ENCODE measurements at regions of chr6 and their contacts with region 1.

Region 1: DNA sequence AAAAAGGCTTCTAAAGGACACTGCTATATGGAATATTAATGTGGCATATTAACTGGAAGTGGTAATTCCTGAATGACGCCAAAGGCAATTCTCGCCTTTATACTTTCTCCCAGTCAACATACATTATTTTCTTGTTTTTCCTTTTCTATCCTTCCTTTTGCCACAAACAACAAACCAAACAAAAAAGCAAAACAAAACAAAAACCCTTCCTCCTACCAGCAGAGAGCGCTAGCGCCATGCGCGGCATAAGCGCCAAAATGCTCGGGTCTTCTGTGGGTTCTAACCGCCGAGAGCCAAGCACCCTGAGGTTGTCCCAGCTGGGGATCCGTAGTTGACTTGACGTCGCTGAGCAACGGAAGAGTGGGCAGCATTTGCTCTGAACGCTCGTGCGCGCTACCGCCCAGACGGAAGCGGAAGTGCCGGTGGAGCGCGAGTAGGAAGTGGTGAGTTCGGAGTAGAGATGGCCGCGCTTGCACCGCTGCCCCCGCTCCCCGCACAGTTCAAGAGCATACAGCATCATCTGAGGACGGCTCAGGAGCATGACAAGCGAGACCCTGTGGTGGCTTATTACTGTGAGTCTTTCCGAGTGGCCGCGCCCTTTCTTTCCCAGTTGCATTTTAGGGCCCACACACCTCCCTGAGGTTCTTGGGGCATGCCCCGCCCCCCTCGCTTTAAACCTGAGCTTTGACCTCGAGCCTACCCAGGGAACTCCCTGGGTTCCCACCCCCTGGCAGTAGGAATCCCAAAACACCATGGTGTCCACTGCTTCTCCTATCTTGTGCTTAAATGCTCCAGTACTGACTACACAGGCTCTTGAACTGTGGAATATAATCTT is at the starts of genes NMBR and VTA1:
- DNase-seq: peak; percentile 81 to 98 (median 97)
- ATAC-seq: peak; percentile 99
- H3K4me3 ChIP-seq: peak within 1 kb of the TSS; percentile 95
- H3K4me3 Mint-ChIP-seq: peak within 1 kb of the TSS; percentile 88 to 98 (median 95)
- H3K27ac ChIP-seq: peak within 1 kb of the TSS; percentile 75
- H3K27ac Mint-ChIP-seq: peak within 1 kb of the TSS; percentile 80 to 98 (median 94)
- H3K4me1 ChIP-seq: peaks cover 22 to 25% of the 10 kb centered on the region in 2 donors
- H3K4me1 Mint-ChIP-seq: peaks cover 36 to 73% (median 65%) of the 10 kb centered on the region in 7 donors
- H3K27me3 ChIP-seq: no peaks in the 10 kb centered on the region
- H3K27me3 Mint-ChIP-seq: peaks cover 0 to 2% (median 0%) of the 10 kb centered on the region in 5 donors
- total RNA-seq, gene NMBR: not detected
- total RNA-seq, gene VTA1: 13.6 to 41.3 (median 32.6) TPM

Region 2: DNA sequence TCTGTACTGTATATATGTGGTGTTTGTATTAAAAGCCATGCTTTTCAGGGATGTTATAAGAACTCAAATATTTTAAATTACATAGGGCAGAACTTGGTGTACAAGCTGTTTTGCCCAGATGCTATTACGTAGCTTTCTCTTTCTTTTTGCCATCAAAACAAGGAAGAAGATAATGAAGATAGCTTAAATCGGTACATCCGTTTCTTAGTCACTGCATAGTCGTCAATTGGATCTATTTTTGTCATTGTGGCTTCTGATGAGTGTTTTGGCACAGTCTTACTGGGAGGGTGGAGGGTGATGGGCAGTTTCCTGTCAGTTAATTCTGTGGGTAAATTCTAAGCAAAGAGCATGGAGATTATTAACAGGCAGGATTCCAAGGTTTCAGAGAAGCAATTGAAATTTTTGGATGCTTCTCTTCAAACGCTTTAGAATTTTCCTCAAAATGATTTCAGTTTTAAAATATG is 663.4 kb before region 1 on chr6:
- CTCF ChIA-PET with region 1: no interaction called
- POLR2A ChIA-PET with region 1: no interaction called
- intact Hi-C with region 1: loop called (anchors 1 to 10 kb)
- DNase-seq: peak in 8 of 9 donors; percentile 32 to 85 (median 82)
- ATAC-seq: peak; percentile 98
- H3K4me3 ChIP-seq: peak overlapping the region; percentile 47
- H3K4me3 Mint-ChIP-seq: peak overlapping the region; percentile 74 to 93 (median 84)
- H3K27ac ChIP-seq: peak overlapping the region; percentile 68
- H3K27ac Mint-ChIP-seq: peak overlapping the region; percentile 81 to 97 (median 92)
- H3K4me1 ChIP-seq: peaks cover 11 to 24% of the 10 kb centered on the region in 2 donors
- H3K4me1 Mint-ChIP-seq: peaks cover 11 to 57% (median 41%) of the 10 kb centered on the region in 7 donors
- H3K27me3 ChIP-seq: no peaks in the 10 kb centered on the region
- H3K27me3 Mint-ChIP-seq: no peaks in the 10 kb centered on the region

Region 3: DNA sequence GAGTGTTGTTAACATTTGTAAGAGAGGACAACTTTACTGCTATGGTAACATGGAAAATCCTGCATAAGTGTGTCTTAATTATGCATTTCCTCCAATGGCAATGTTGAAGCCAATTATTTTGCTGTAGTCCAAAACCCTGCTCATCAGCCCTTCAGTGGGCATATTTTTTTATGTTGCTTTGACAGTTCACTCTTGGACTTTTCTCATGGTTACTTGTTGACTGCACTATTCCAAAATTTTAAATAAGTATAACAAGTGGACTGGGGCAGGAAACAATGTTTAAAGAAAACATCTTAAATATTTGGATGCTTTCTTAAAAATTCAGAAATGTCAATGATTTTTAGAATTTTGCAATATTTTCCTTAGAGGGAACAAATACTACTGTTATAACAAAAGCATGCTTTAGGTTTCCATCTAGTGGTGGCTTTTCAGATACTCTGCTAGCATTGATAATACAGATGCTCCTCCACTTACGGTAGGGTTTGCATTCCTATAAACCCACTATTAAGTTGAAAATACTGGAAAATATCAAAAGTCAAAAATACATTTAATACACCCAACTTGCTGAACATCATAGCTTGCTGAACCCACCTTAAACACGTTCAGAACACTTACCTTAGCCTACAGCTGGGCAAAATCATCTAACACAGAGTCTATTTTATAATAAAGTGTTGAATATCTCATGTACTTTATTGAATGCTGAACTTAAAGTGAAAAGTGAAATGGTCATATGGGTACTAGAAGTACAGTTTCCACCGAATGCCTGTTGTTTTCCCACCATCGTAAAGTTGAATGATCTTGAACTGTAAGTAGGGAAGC is 241.2 kb after region 1 on chr6:
- CTCF ChIA-PET with region 1: interaction called, 4 read pairs
- POLR2A ChIA-PET with region 1: interaction called, 5 read pairs
- intact Hi-C with region 1: loop called (anchors 1 kb)
- DNase-seq: peak in 7 of 9 donors; percentile 22 to 50 (median 26)
- ATAC-seq: peak; percentile 67
- H3K4me3 ChIP-seq: no peak overlapping the region
- H3K4me3 Mint-ChIP-seq: no peak overlapping the region
- H3K27ac ChIP-seq: no peak overlapping the region
- H3K27ac Mint-ChIP-seq: no peak overlapping the region
- H3K4me1 ChIP-seq: peaks cover 0 to 9% of the 10 kb centered on the region in 2 donors
- H3K4me1 Mint-ChIP-seq: peaks cover 0 to 28% (median 9%) of the 10 kb centered on the region in 7 donors
- H3K27me3 ChIP-seq: no peaks in the 10 kb centered on the region
- H3K27me3 Mint-ChIP-seq: peaks cover 0 to 49% (median 0%) of the 10 kb centered on the region in 5 donors

Region 4: GRCh38 chr6:143060354-143060805 is 913.3 kb after region 1 on chr6:
- CTCF ChIA-PET with region 1: no interaction called
- POLR2A ChIA-PET with region 1: no interaction called
- intact Hi-C with region 1: loop called in 1 of 2 experiments (anchors 2 kb)
- DNase-seq: peak; percentile 63 to 82 (median 72)
- ATAC-seq: peak; percentile 85
- H3K4me3 ChIP-seq: peak overlapping the region; percentile 73
- H3K4me3 Mint-ChIP-seq: peak overlapping the region; percentile 88 to 98 (median 94)
- H3K27ac ChIP-seq: peak overlapping the region; percentile 79
- H3K27ac Mint-ChIP-seq: peak overlapping the region; percentile 92 to 98 (median 96)
- H3K4me1 ChIP-seq: peaks cover 8% of the 10 kb centered on the region in 2 donors
- H3K4me1 Mint-ChIP-seq: peaks cover 16 to 34% (median 28%) of the 10 kb centered on the region in 7 donors
- H3K27me3 ChIP-seq: no peaks in the 10 kb centered on the region
- H3K27me3 Mint-ChIP-seq: no peaks in the 10 kb centered on the region

Region 5: DNA sequence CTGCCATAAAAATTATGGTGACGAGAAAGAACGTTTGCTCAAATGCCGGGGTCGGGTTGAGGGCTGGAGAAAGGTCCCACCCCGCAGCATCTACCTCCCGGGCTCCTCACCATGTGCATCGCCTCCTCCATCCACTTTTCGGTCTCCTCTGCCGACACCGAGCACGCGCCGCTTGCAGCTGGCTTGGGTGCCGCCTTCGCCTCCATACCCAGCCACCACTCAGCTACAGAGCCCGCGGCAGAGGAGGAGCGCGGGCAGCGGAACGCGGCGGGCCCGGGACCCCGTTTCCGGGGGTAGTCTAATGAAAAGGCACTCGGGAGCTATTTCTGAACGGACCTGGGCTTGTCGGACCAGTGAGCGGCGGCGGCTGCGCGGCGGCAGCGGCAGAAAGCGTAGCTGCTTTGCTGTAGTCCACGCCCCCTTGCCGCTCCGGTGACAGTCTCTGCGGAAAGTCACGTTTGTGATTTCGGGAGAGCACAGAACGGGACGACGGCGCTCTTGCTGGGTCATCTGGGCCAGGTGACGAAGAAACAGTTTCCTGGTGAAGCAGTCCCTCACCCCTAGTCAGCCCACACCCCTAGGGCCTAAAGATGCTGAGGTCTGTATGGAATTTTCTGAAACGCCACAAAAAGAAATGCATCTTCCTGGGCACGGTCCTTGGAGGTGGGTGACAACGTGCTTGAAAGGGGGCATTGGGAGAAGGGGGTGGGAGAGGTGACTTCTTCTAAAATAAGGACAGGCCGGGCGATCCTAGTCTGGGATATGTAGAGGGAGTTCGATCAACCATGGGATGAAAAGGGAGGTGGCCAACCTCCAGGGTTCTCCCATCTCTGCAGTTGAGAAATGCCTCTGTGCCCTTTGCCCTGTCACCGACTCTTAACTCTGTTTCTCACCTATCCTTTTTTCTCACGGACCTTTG is 1303.7 kb after region 1 on chr6 and contains the starts of genes ADAT2 and PEX3:
- CTCF ChIA-PET with region 1: no interaction called
- POLR2A ChIA-PET with region 1: no interaction called
- intact Hi-C with region 1: loop called (anchors 1 kb)
- DNase-seq: peak; percentile 87 to 95 (median 94)
- ATAC-seq: peak; percentile 98
- H3K4me3 ChIP-seq: peak within 1 kb of the TSS; percentile 89
- H3K4me3 Mint-ChIP-seq: peak within 1 kb of the TSS; percentile 84 to 100 (median 99)
- H3K27ac ChIP-seq: peak within 1 kb of the TSS; percentile 80
- H3K27ac Mint-ChIP-seq: peak within 1 kb of the TSS; percentile 93 to 99 (median 96)
- H3K4me1 ChIP-seq: peaks cover 14 to 18% of the 10 kb centered on the region in 2 donors
- H3K4me1 Mint-ChIP-seq: peaks cover 20 to 61% (median 49%) of the 10 kb centered on the region in 7 donors
- H3K27me3 ChIP-seq: no peaks in the 10 kb centered on the region
- H3K27me3 Mint-ChIP-seq: no peaks in the 10 kb centered on the region
- total RNA-seq, gene ADAT2: 18.4 to 25.8 (median 20.8) TPM
- total RNA-seq, gene PEX3: 10.9 to 28.8 (median 19.1) TPM

Region 6: DNA sequence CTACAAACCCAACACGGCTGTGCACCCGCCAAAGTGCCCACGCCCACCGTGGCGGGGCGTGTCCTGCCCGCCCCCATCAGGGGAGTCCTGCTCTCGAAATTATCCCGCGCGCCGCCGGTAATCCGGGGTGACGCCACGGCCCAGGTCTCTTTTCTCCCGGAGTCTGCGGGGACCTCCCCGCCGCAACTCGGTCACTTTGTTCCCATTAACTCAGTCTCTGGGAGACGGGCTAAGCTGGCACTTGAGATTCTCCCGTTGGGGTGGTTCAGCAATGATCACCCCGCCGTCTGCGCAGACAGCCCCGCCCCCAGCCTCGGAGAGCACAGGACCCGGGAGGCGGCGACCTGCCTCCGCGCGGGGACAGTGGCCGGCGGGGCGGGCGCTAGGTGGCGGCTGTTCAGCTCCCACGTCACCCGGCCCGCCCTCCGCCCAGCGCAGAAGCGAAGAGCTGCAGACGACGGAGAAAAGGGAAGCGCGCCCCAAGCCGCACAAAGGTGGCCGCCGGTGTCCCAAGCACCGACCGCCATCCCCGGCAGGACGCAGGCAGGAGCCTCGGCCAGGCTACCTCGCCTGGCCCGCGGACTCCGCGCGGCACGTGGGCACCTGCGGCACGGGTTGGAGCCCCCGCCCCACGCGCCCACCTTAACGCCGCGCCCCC is 1916.8 kb after region 1 on chr6:
- CTCF ChIA-PET with region 1: no interaction called
- POLR2A ChIA-PET with region 1: no interaction called
- intact Hi-C with region 1: loop called in 1 of 2 experiments (anchors 1 kb)
- DNase-seq: peak; percentile 84 to 91 (median 88)
- ATAC-seq: peak; percentile 96
- H3K4me3 ChIP-seq: peak overlapping the region; percentile 56
- H3K4me3 Mint-ChIP-seq: peak overlapping the region; percentile 87 to 94 (median 91)
- H3K27ac ChIP-seq: peak overlapping the region; percentile 85
- H3K27ac Mint-ChIP-seq: peak overlapping the region; percentile 83 to 97 (median 88)
- H3K4me1 ChIP-seq: peaks cover 0 to 12% of the 10 kb centered on the region in 2 donors
- H3K4me1 Mint-ChIP-seq: peaks cover 17 to 44% (median 29%) of the 10 kb centered on the region in 7 donors
- H3K27me3 ChIP-seq: no peaks in the 10 kb centered on the region
- H3K27me3 Mint-ChIP-seq: peaks cover 0 to 2% (median 0%) of the 10 kb centered on the region in 5 donors

Measured in naive thymus-derived CD4-positive, alpha-beta T cell (primary cell).